ENCODE measurements at regions of chr4 and their contacts with region 1.

Region 1: GRCh38 chr4:91851456-91851855 is 452.3 kb upstream of the GRID2 start:
- DNase-seq: no peak

Region 2: GRCh38 chr4:91924625-91925024 is 73.2 kb after region 1 on chr4:
- intact Hi-C with region 1: loop called in 1 of 2 experiments (anchors 2 kb)
- DNase-seq: peak; percentile 69

Region 3: GRCh38 chr4:92334716-92335350 is 483.4 kb after region 1 on chr4:
- intact Hi-C with region 1: no loop called
- DNase-seq: no peak

Measured in posterior vena cava (tissue), 2 donors.